Activated naive CD4-positive, alpha-beta T cell treated with anti-CD3 and anti-CD28 coated beads for 36 hours (primary cell): ENCODE measurements at regions of chr7 and their contacts with region 1.

Region 1: DNA sequence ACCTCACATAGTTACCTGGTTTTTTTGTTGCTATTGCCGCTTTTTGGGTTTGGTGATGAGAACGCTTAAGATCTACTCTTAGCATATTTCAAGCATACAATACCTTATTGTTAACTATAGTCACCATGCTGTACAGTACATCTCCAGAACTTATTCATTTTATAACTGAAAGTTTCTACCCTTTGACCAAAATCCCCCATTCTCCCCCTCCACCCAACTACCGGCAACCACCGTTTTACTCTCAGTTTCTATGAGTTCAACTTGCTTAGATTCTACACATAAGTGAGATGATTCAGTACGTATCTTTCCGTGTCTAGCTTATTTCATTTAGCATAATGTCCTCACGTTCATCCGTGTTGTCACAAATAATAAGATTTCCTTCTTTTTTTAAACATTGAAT is 86.7 kb upstream of the IL6 start:
- DNase-seq: peak; percentile 75
- H3K4me3 Mint-ChIP-seq: no peak overlapping the region
- H3K27ac Mint-ChIP-seq: peak overlapping the region; percentile 41
- H3K4me1 Mint-ChIP-seq: peaks cover 23% of the 10 kb centered on the region
- H3K27me3 Mint-ChIP-seq: peaks cover 8% of the 10 kb centered on the region

Region 2: GRCh38 chr7:22302951-22303423 is 337.3 kb before region 1 on chr7:
- CTCF ChIA-PET with region 1: no interaction called
- intact Hi-C with region 1: no loop called
- DNase-seq: no peak
- H3K4me3 Mint-ChIP-seq: no peak overlapping the region
- H3K27ac Mint-ChIP-seq: no peak overlapping the region
- H3K4me1 Mint-ChIP-seq: no peaks in the 10 kb centered on the region
- H3K27me3 Mint-ChIP-seq: peaks cover 1% of the 10 kb centered on the region

Region 3: GRCh38 chr7:22586786-22587140 is 53.5 kb before region 1 on chr7:
- CTCF ChIA-PET with region 1: no interaction called
- intact Hi-C with region 1: loop called (anchors 1 kb)
- DNase-seq: no peak
- H3K4me3 Mint-ChIP-seq: no peak overlapping the region
- H3K27ac Mint-ChIP-seq: no peak overlapping the region
- H3K4me1 Mint-ChIP-seq: peaks cover 19% of the 10 kb centered on the region
- H3K27me3 Mint-ChIP-seq: peaks cover 21% of the 10 kb centered on the region

Region 4: DNA sequence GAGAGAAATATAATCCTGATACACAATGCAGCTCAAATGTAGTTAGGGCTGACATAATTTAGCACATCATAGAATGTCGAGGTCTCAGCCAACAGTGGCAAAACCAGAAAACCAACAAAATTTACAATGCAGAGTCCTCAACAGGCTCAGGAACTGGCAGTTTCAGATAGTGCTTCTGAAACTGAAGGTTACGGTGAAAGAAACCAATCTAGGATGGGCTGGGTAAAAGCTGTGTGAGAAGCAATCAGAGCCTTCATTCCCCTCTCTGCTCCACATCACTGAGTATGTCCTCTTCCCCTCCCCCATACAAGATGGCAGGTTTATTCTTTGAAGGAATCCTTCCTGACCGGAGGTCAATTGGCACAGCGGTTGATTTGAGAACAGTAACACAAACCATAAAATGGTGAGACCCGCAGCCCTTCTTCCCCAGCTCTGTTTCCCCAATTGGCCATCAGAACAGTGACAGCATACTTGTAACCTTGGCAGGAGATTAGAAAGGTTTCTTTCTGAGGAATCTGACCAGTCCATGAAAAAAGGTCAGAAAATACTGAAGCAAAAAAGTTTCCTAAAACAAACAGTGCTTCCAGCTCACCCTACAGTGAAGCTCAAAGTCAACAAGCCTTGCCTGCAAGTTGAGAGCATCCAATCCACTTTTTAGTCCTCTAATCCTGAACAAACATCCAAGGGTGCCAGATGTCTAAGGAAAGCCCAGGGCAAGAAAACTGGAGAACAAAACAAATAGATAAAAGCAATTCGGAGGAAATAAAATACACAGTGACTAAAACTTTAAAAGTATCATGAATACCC is 32.8 kb after region 1 on chr7:
- CTCF ChIA-PET with region 1: interaction called, 4 read pairs
- intact Hi-C with region 1: loop called (anchors 1 kb)
- DNase-seq: no peak
- H3K4me3 Mint-ChIP-seq: no peak overlapping the region
- H3K27ac Mint-ChIP-seq: no peak overlapping the region
- H3K4me1 Mint-ChIP-seq: peaks cover 64% of the 10 kb centered on the region
- H3K27me3 Mint-ChIP-seq: no peaks in the 10 kb centered on the region